B cell (primary cell): ENCODE measurements at regions of chr10 and their contacts with region 1.

Region 1: GRCh38 chr10:20922451-20922850 is 25.3 kb upstream of the NEBL start:
- DNase-seq: no peak
- ATAC-seq: no peak
- H3K4me3 ChIP-seq: no peak overlapping the region
- H3K4me3 Mint-ChIP-seq: no peak overlapping the region
- H3K27ac ChIP-seq: no peak overlapping the region
- H3K27ac Mint-ChIP-seq: no peak overlapping the region
- H3K4me1 ChIP-seq: no peaks in the 10 kb centered on the region
- H3K4me1 Mint-ChIP-seq: no peaks in the 10 kb centered on the region
- H3K27me3 ChIP-seq: no peaks in the 10 kb centered on the region
- H3K27me3 Mint-ChIP-seq: peaks cover 3% of the 10 kb centered on the region
- CTCF ChIP-seq: no peak

Region 2: DNA sequence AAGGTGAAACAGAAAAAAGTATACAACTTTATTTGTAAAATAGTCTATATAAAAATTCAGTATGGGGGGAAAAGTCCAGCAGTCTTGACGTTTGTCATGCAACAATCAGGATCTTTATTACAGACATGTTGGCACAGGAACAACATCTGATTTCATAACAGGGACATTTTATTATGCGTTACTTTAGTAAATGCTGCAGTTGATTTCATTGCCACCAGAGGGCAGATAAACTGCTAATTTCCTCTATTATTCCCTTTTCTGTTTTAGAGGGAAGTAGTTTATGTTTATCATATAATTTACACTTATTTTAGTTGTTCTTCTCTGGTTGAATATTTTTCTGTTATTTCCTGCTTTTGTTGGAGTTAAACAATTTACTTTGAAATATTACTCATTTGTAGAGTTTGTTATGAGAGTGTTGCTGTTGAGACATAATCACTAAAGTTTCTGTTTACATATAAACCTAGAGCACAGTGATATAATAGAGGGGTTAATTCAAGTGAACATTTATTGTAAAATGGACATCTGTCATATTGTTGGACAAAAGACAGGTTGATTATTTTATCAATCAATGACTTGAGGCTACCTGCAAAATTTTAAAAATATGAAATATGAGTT is 1102.9 kb before region 1 on chr10:
- CTCF ChIA-PET with region 1: no interaction called
- POLR2A ChIA-PET with region 1: no interaction called
- intact Hi-C with region 1: loop called (anchors 10 kb)
- DNase-seq: peak; percentile 25
- ATAC-seq: no peak
- H3K4me3 ChIP-seq: no peak overlapping the region
- H3K4me3 Mint-ChIP-seq: no peak overlapping the region
- H3K27ac ChIP-seq: no peak overlapping the region
- H3K27ac Mint-ChIP-seq: no peak overlapping the region
- H3K4me1 ChIP-seq: peaks cover 21 to 24% of the 10 kb centered on the region in 2 donors
- H3K4me1 Mint-ChIP-seq: peaks cover 14% of the 10 kb centered on the region
- H3K27me3 ChIP-seq: peaks cover 0 to 29% (median 20%) of the 10 kb centered on the region in 4 experiments
- H3K27me3 Mint-ChIP-seq: peaks cover 15% of the 10 kb centered on the region
- CTCF ChIP-seq: peak; percentile 84

Region 3: GRCh38 chr10:21184216-21184615 is 261.8 kb after region 1 on chr10:
- CTCF ChIA-PET with region 1: no interaction called
- POLR2A ChIA-PET with region 1: no interaction called
- intact Hi-C with region 1: no loop called
- DNase-seq: no peak
- ATAC-seq: no peak
- H3K4me3 ChIP-seq: no peak overlapping the region
- H3K4me3 Mint-ChIP-seq: no peak overlapping the region
- H3K27ac ChIP-seq: no peak overlapping the region
- H3K27ac Mint-ChIP-seq: no peak overlapping the region
- H3K4me1 ChIP-seq: no peaks in the 10 kb centered on the region
- H3K4me1 Mint-ChIP-seq: no peaks in the 10 kb centered on the region
- H3K27me3 ChIP-seq: no peaks in the 10 kb centered on the region
- H3K27me3 Mint-ChIP-seq: peaks cover 14% of the 10 kb centered on the region
- CTCF ChIP-seq: no peak